GM10248 (cell line): ENCODE measurements at regions of chr1 and their contacts with region 1.

Region 1: DNA sequence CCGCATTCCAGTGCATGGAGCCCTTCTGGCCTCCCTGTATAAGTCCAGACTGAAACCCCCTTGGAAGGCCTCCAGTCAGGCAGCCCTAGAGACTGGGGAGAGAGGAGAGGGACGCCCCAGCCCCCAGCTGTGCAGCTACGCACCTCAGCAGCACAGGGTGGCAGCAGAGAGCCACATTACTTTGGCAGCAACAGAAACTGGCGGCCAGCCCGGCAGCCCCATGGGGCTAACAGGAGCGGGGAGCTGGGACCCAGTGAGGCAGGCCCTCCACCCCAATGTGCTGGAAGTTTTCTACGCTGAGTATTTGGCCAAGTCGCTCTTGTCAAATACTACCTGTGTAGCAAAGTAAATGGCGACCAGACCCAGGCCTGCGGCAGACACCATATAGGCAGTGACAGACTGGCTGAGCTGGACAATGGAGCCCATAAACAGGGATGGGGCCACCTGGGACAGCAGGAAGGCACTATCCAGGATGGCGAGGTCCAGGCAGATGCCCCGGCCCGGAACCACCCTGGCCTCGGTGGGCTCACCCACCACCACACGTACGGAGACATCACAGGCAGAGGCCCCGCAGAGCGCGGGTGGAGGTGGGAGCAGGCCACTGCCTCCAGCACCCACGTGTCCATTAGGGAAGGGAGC is 21.2 kb downstream of the SLC45A3 start:
- DNase-seq: peak; percentile 89
- CTCF ChIP-seq: peak; percentile 97

Region 2: GRCh38 chr1:205561501-205562203 is 97.4 kb before region 1 on chr1:
- CTCF ChIA-PET with region 1: interaction called, 12 read pairs
- POLR2A ChIA-PET with region 1: no interaction called
- DNase-seq: no peak
- CTCF ChIP-seq: no peak

Region 3: GRCh38 chr1:205616563-205617293 is 42.3 kb before region 1 on chr1:
- CTCF ChIA-PET with region 1: interaction called, 12 read pairs
- POLR2A ChIA-PET with region 1: no interaction called
- DNase-seq: peak; percentile 36
- CTCF ChIP-seq: no peak

Region 4: DNA sequence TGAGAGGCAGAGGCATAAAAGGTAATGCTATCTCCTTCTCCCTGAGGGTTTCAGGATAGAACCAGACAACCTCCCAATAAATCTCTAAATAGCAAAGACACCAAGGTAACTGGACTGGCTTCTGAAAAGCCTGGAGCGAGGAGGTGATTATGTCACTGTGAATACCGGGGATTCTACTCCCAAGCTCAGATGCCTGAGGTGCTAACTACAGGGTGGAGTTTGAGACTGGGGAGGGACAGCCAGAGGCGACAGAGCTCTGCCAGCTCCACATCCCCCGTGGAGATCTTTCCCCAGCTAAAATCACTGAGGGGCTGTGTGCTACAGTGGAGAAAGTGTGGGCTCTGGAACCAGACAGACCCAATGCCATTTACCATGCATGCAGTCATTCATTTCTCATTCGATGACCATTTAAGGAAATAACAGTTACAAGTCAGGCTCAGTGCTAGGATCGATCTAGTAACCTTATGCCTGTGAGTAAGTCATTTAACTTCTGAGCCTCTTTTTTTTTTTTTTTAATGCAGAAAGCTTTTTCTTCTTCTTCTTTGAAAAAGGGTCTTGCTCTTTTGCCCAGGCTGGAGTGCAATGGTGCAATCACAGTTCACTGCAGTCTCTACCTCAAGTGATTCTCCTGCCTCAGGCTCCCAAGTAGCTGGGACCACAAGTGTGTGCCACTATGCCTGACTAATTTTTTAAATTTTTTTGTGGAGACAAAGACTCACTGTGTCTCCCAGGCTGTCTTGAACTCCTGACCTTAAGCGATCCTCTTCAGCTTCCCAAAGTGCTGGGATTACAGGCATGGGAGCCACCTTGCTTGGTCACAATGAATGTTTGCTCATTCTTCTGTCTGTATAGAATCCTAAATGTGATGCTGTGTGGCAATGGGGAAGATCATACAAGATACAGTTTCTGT is 29.4 kb after region 1 on chr1:
- CTCF ChIA-PET with region 1: interaction called, 17 read pairs
- POLR2A ChIA-PET with region 1: no interaction called
- DNase-seq: no peak
- CTCF ChIP-seq: no peak

Region 5: GRCh38 chr1:205719762-205720161 is 60.7 kb after region 1 on chr1:
- CTCF ChIA-PET with region 1: interaction called, 372 read pairs
- POLR2A ChIA-PET with region 1: no interaction called
- DNase-seq: no peak
- CTCF ChIP-seq: no peak

Region 6: DNA sequence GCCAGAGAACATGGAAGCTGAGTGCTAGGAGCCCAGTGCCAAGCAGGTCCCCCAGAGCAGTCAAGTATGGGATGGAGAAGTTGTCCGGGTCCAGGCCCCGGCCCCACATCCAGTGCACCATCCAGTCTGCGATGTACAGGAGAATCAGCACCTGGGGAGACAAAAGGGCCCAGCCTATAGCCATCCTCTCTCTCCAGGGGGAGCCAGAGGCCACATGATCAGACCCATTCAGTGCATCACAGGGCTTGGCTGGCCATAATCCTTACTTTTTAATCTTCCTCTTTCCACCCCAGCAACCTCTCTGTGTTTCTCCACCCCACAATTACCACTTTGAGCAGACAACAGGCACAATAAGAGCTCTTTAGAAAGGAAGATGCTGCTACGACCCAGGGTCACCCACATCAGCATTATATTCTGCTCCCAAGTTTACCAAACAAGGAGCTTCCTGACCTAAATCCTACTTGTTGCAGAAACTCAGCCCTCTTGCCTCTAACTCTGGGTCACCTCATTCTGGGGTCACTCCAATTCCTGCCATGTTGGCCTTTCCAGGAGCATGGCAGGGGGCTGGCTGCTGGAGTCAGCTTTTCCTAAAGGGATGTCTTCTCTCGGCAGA is 132.6 kb after region 1 on chr1:
- CTCF ChIA-PET with region 1: interaction called, 26 read pairs
- POLR2A ChIA-PET with region 1: no interaction called
- DNase-seq: peak; percentile 77
- CTCF ChIP-seq: peak; percentile 75

Region 7: GRCh38 chr1:206106328-206107167 is 447.5 kb after region 1 on chr1:
- CTCF ChIA-PET with region 1: interaction called, 15 read pairs
- POLR2A ChIA-PET with region 1: no interaction called
- DNase-seq: peak; percentile 86
- CTCF ChIP-seq: peak; percentile 85